ENCODE measurements at regions of chr2 and their contacts with region 1.

Region 1: DNA sequence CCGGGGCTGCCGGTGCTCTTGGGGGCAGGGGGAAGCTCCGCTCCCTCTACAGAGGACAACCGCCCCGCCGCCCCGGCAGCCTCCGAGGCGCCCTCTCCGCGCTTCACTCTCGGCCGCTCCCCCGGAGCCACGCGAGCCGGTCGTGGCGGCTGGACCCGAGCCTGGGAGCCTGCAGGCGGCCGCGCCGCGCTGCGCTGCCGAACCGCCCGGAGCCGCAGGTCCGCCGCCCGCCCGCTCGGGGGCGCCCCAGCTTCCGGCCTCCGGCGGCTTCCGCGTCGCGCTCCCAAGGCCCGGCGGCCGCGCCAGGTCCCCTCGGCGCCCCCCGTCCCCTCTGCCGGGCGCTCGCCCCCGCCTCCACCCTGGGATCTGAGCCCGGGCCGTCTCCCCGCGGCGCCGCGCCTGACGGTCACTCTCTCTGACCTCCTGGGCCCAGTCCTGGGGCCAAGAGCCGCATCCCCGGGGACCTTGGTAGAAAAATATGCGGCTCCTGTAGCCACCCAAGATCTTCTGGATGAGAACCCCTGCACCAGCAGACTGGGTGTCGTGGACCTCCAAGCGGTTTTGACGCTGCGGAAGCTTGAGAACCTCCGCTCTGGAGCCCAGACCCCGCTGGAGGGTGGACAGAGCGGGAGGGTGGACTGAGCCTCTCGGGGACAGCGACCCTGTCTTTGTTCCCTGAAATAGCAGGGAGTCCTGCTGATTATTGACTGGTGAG is 44.3 kb downstream of the SERTAD2 start:
- DNase-seq: peak; percentile 82
- ATAC-seq: peak; percentile 61
- H3K4me3 Mint-ChIP-seq: peak overlapping the region; percentile 65
- H3K27ac Mint-ChIP-seq: no peak overlapping the region
- H3K4me1 Mint-ChIP-seq: peaks cover 25% of the 10 kb centered on the region
- H3K27me3 Mint-ChIP-seq: no peaks in the 10 kb centered on the region

Region 2: GRCh38 chr2:64273524-64274398 is 335.6 kb before region 1 on chr2:
- CTCF ChIA-PET with region 1: no interaction called
- POLR2A ChIA-PET with region 1: no interaction called
- intact Hi-C with region 1: no loop called
- DNase-seq: no peak
- ATAC-seq: no peak
- H3K4me3 Mint-ChIP-seq: no peak overlapping the region
- H3K27ac Mint-ChIP-seq: no peak overlapping the region
- H3K4me1 Mint-ChIP-seq: peaks cover 23% of the 10 kb centered on the region
- H3K27me3 Mint-ChIP-seq: no peaks in the 10 kb centered on the region

Region 3: GRCh38 chr2:64586883-64587481 is 22.4 kb before region 1 on chr2:
- CTCF ChIA-PET with region 1: interaction called, 15 read pairs
- POLR2A ChIA-PET with region 1: no interaction called
- intact Hi-C with region 1: no loop called
- DNase-seq: no peak
- ATAC-seq: peak; percentile 44
- H3K4me3 Mint-ChIP-seq: no peak overlapping the region
- H3K27ac Mint-ChIP-seq: no peak overlapping the region
- H3K4me1 Mint-ChIP-seq: peaks cover 20% of the 10 kb centered on the region
- H3K27me3 Mint-ChIP-seq: no peaks in the 10 kb centered on the region

Region 4: GRCh38 chr2:64698668-64699444 is 89.5 kb after region 1 on chr2:
- CTCF ChIA-PET with region 1: no interaction called
- POLR2A ChIA-PET with region 1: no interaction called
- intact Hi-C with region 1: loop called in 1 of 2 experiments (anchors 1 kb)
- DNase-seq: no peak
- ATAC-seq: peak; percentile 89
- H3K4me3 Mint-ChIP-seq: no peak overlapping the region
- H3K27ac Mint-ChIP-seq: peak overlapping the region; percentile 70
- H3K4me1 Mint-ChIP-seq: peaks cover 54% of the 10 kb centered on the region
- H3K27me3 Mint-ChIP-seq: no peaks in the 10 kb centered on the region

Region 5: DNA sequence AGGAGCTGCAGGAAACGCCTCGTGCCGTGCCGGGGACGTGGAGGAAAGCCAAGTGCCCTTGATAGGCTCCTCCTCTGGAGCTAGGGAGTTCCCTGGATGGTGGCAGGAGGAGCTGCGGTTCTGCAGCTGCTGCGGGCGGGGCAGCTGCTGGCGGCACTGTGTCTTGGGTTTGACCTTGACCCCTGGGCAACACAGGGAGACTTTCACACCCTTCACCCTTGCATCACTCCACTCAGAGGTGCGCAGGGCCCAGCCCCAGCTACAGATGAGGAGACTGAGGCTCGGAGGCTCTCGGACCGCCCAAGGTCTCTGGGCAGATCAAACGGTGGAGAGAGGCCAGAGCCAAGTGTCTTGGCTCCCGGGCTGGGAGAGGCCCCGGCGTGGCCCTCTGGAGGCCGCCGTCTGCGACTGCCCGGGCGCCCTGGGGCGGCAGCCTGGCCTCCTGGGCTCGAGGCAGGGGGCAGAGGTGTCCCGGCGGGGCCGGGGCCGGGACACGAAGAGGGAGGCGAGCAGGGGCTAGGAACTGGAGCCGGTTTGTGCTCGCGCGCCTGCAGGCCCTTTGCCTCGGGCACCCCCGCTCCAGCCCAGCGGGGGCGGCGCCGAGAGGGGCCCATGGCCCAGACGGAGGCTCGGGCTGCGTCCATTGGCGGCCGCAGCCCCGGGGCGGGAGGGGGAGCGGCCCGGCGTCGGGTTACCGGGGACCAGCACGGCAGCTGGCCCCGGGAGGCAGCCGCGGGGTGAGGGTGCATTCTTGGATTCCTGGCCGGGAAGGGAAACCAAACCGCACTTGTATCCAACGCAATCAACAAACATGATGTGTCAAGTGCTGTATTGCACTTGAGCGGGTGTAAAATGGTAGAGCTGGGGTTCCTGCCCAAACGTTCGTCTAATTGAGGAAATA is 250.2 kb after region 1 on chr2:
- CTCF ChIA-PET with region 1: interaction called, 3 read pairs
- POLR2A ChIA-PET with region 1: interaction called, 3 read pairs
- intact Hi-C with region 1: loop called (anchors 2 to 5 kb)
- DNase-seq: peak; percentile 23
- ATAC-seq: no peak
- H3K4me3 Mint-ChIP-seq: no peak overlapping the region
- H3K27ac Mint-ChIP-seq: no peak overlapping the region
- H3K4me1 Mint-ChIP-seq: peaks cover 4% of the 10 kb centered on the region
- H3K27me3 Mint-ChIP-seq: peaks cover 8% of the 10 kb centered on the region

Region 6: DNA sequence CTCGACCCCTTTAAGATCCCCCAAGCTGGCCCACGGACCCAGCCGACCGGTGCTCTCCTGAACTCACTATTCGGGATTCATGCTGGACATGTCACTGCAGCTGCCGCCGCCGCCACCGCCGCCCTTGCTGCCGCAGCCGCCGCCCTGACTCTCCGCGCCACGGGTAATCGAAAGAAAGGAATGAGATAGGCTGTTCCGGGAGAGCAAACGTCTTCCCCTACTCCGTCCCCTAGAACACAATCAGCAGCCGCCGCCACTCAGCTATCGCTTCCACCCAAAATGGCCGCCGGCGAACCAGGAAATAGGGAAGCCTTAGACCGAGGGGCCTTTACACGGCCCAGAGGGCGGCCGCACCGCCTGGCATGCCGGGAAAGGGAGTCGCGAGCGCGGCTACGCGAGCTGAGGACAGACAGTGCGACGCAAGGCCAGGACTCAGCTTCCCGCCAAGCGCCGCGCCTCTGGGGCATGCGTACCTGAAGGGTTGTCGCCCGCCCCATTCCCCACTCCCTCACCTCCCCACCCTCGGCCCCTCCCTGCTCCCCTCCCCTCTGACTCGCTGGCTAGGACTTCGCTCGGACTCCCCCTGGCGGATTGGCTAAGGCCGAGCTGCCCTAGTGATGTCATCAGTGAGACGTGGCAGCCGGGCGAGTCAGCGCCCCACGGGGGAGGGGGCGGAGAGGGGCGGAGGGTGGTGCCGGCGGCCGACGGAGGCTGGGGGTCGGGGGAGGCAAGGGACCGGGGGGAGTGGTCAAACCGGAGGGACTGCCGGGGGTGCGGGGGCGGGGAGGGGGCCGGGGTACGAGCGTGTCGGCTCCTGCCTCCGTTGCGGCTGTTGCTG is 520.7 kb after region 1 on chr2 and contains the start of gene RAB1A:
- CTCF ChIA-PET with region 1: no interaction called
- POLR2A ChIA-PET with region 1: interaction called, 3 read pairs
- intact Hi-C with region 1: loop called in 1 of 2 experiments (anchors 1 kb)
- DNase-seq: peak; percentile 100
- ATAC-seq: peak; percentile 95
- H3K4me3 Mint-ChIP-seq: peak within 1 kb of the TSS; percentile 100
- H3K27ac Mint-ChIP-seq: peak within 1 kb of the TSS; percentile 100
- H3K4me1 Mint-ChIP-seq: peaks cover 30% of the 10 kb centered on the region
- H3K27me3 Mint-ChIP-seq: no peaks in the 10 kb centered on the region
- total RNA-seq, gene RAB1A: 77.1 to 84.8 TPM